Activated naive CD4-positive, alpha-beta T cell treated with anti-CD3 and anti-CD28 coated beads for 36 hours (primary cell): ENCODE measurements at regions of chr4 and their contacts with region 1.

Region 1: DNA sequence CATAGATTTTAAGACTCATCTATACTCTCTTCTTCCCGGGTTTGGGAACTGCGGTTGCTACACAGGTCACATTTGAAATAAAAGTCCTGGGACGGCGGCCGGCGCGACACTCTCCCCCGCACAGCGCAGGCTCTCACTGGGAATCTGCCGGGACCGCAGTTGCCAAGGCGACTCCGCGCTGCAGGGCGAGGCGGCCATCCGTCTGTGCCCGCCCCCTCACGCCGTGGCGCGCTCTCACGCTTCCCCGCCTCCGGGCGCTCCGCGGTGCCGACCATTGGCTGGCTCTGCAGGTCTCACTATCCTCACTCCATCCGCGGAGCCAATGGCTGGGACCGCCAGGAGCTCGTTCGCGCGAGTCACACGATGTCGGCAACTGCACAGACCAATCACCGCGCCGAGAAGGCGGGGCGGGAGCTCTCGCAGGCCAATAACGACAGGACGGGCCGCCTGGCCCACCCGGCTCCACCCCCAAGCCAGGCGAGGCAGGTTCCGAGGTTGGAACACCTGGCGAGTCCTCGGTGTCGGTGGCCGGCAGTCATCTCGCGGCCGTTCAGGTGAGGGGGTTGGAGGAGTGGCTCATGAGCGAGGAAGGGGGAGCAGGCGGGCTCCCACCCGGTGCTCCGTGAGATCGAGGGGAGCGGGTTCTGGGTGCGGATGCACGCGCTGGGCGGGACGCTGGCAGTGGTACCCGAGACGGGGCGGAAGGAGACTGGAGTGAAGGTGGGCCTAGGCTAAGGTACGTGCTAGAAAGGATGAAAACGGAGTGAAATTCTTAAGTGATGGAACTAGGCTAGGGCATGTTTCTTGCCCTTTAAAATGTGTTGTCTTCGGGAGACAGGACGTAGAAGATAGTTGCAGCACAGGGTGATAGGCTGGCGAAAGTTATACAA is at the start of gene MSMO1:
- DNase-seq: peak; percentile 99
- H3K4me3 Mint-ChIP-seq: no peak within 1 kb of the TSS
- H3K27ac Mint-ChIP-seq: no peak within 1 kb of the TSS
- H3K4me1 Mint-ChIP-seq: peaks cover 42% of the 10 kb centered on the region
- H3K27me3 Mint-ChIP-seq: no peaks in the 10 kb centered on the region
- total RNA-seq, gene MSMO1: 61.2 to 72.1 TPM

Region 2: DNA sequence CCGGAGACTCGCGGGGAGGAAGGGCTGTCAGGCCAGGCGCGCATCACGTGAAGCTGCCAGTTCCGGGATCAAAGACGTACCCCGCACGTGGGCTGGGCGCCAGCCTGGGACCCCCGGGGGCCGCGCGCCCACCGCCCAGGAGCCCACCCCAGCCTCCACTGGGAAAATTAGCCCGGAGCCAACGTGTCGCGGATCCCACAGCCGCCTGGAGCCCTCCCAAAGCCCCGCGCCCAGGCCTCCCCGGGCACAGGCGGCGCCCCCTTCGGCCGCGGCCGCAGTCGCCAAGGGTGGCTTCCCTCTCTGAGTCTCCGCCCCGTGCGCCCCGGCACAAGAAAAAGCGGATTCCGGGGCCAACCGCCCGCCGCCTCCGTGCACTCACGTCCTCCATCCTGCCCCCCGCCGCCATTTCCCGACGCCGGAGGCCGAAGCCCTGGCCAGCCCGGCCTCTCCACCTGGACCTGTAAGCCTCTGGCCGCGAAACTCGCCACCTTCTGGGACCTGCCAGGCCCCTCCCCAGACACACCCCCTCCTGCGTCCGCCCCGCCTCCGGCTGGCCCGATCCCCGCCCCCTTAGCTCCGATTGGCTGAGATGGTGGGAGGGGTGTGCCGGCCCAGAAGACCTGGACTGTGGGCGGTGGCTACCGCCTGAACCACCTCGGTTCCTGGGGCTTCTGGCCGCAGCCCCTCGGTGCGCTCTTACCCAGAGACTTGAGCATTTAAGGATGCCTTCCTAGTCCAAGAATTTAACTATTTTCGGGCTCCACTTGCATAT is 214.9 kb before region 1 on chr4 and contains the start of gene TMEM192:
- CTCF ChIA-PET with region 1: interaction called, 4 read pairs
- intact Hi-C with region 1: loop called (anchors 1 kb)
- DNase-seq: peak; percentile 93
- H3K4me3 Mint-ChIP-seq: peak within 1 kb of the TSS; percentile 94
- H3K27ac Mint-ChIP-seq: peak within 1 kb of the TSS; percentile 74
- H3K4me1 Mint-ChIP-seq: peaks cover 13% of the 10 kb centered on the region
- H3K27me3 Mint-ChIP-seq: no peaks in the 10 kb centered on the region
- total RNA-seq, gene TMEM192: 6.3 to 8.9 TPM

Region 3: GRCh38 chr4:165190591-165191347 is 136.7 kb before region 1 on chr4:
- CTCF ChIA-PET with region 1: no interaction called
- intact Hi-C with region 1: loop called (anchors 1 kb)
- DNase-seq: peak; percentile 73
- H3K4me3 Mint-ChIP-seq: no peak overlapping the region
- H3K27ac Mint-ChIP-seq: peak overlapping the region; percentile 79
- H3K4me1 Mint-ChIP-seq: peaks cover 33% of the 10 kb centered on the region
- H3K27me3 Mint-ChIP-seq: peaks cover 4% of the 10 kb centered on the region

Region 4: GRCh38 chr4:165234766-165235165 is 92.7 kb before region 1 on chr4:
- CTCF ChIA-PET with region 1: no interaction called
- intact Hi-C with region 1: loop called (anchors 1 kb)
- DNase-seq: no peak
- H3K4me3 Mint-ChIP-seq: no peak overlapping the region
- H3K27ac Mint-ChIP-seq: no peak overlapping the region
- H3K4me1 Mint-ChIP-seq: peaks cover 29% of the 10 kb centered on the region
- H3K27me3 Mint-ChIP-seq: no peaks in the 10 kb centered on the region

Region 5: DNA sequence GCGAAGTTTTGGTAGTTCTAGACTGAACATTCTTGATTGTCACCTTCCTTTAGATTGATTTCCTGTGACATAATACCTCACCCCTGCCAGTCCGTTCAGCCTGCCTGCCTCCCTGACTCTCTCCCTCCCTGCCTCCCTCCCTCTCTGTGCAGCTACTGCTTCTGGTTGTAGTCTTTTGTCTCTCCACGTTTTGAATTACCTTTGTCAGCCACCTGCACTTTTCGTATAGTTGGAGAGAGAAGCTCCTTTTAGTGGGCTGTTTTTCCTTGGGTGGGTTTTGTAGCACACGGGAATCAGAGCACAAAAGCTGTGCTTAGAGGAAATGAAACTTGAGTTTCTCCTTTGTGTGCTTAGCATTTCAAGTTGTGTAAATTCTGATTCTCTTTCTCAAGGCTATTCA is 32.5 kb before region 1 on chr4:
- CTCF ChIA-PET with region 1: no interaction called
- intact Hi-C with region 1: loop called (anchors 5 kb)
- DNase-seq: peak; percentile 62
- H3K4me3 Mint-ChIP-seq: peak overlapping the region; percentile 22
- H3K27ac Mint-ChIP-seq: peak overlapping the region; percentile 54
- H3K4me1 Mint-ChIP-seq: peaks cover 17% of the 10 kb centered on the region
- H3K27me3 Mint-ChIP-seq: no peaks in the 10 kb centered on the region

Region 6: DNA sequence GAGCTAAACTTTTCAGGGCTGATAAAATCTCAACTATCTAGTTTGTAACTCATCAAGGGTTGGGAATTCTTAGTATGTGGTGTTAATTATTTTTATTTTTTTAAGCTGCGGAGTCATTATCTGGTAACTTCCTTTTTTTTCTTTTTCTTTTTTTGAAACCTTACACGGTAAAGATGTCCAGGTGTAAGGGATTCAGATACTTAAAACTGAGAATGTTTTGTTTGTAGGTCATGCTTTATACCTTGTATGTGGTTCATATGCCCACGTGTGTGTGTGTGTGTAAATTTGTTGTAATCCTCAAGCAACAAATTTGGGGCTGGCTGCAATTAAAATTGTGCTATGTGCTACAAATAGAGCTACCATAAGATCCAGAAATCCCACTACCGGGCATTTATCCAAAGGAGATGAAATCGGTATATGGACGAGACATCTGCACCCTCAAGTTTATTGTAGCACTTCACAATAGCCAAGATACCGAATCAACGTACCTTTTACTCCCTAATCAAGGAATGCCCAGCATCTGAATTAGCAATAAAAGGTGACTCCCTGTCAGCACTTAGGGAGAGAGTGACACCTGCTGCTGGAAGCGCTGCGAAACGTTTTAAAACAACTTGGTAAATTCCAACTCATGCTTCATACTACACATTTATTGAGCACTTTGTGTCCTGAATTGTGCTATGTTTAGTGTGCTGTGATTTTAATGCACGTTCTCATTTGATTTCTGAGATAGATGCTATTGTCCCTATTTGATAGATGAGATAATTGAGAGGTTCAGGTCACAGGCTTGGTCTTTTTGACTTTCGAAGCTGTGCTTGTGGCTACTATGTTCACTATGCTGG is 16.1 kb after region 1 on chr4:
- CTCF ChIA-PET with region 1: no interaction called
- intact Hi-C with region 1: loop called (anchors 1 kb)
- DNase-seq: peak; percentile 50
- H3K4me3 Mint-ChIP-seq: no peak overlapping the region
- H3K27ac Mint-ChIP-seq: peak overlapping the region; percentile 19
- H3K4me1 Mint-ChIP-seq: no peaks in the 10 kb centered on the region
- H3K27me3 Mint-ChIP-seq: no peaks in the 10 kb centered on the region